Sciatic nerve (tissue), 2 donors: ENCODE measurements at regions of chr17 and their contacts with region 1.

Region 1: DNA sequence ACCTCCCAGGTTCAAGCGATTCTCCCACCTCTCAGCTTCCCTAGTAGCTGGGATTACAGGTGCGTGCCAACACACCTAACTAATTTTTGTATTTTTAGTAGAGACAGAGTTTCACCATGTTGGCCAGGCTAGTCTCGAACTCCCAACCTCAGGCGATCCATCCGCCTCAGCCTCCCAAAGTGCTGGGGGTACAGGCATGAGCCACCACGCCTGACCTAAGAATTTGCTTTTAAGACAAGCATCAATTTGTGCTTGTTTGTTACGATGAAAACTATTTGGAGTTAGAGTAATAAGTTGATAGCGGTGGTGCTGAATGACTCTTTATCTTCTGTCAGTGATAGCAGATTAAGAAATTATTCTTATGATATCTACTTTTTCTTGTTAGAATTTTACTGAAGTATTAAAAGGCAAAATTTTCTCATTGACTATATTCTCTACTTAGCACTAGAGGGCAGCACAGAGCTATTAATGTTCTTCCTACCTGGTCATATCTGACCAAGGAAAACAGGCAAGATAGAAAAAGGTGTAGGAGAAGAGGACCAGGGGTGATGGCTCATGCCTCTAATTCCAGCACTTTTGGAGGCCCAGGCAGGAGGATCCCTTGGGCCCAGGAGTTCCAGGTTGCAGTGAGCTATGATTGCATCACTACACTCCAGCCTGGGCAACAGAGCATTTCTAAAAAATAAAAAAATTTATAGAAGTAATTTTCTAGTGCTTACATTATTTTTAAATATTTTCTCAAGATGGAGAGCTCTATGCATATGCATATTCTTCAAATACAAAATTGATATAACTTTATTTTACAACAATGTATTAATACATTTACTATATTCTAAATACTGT is 24.5 kb downstream of the STXBP4 start:
- DNase-seq: no peak
- ATAC-seq: peak; percentile 44

Region 2: DNA sequence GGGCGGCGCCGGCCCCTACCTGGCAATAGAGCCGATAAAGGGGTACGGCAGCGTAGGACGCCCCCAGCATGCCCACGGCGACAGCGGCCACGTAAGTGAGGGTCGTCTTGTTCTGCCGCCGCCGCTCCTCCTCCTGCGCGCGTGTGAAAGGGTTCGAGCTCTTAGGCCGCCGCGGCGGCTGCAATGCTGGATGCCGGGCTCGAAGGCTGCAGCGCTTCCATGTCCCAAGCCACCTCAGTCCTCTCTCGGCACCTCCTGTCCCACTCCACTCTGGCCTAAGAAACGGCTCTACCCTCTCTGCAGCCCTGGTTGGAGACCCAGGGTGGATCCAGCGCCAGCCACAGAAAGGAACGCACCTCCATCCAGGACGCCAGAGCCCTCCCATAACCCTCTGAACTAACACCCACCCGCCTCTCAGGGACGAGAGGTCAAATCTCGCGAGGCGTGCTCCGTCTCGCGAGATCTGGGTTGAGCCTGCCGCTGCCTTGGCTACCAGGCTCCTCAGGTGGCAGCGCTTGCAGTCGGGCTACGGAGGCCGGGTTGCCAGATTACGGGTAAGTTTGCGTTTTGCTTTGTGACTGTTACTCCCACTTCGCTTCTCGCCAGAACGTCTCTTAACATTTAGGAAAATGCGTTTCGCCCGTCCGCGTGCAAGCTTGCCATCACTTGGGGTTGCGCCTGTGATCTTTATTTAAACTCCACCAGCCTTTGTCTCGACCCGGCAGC is 24.6 kb before region 1 on chr17 and contains the starts of genes COX11 and STXBP4:
- intact Hi-C with region 1: no loop called
- DNase-seq: peak; percentile 96
- ATAC-seq: peak; percentile 100
- total RNA-seq, gene COX11: 57.2 TPM
- total RNA-seq, gene STXBP4: 22.2 TPM

Region 3: GRCh38 chr17:55067697-55068439 is 74.8 kb after region 1 on chr17:
- intact Hi-C with region 1: no loop called
- DNase-seq: no peak
- ATAC-seq: no peak

Region 4: GRCh38 chr17:55416470-55417052 is 423.5 kb after region 1 on chr17:
- intact Hi-C with region 1: loop called (anchors 10 kb)
- DNase-seq: no peak
- ATAC-seq: no peak

Region 5: GRCh38 chr17:55513885-55514591 is 521.0 kb after region 1 on chr17:
- intact Hi-C with region 1: loop called (anchors 10 kb)
- DNase-seq: peak; percentile 83
- ATAC-seq: peak; percentile 73